IMR-90 (cell line): ENCODE measurements at regions of chr7 and their contacts with region 1.

Region 1: GRCh38 chr7:100545360-100546128 is 6.5 kb downstream of the AGFG2 start:
- DNase-seq: peak; percentile 86
- ATAC-seq: peak; percentile 93
- H3K4me3 ChIP-seq: no peak overlapping the region
- H3K27ac ChIP-seq: peak overlapping the region; percentile 49
- H3K4me1 ChIP-seq: peaks cover 28% of the 10 kb centered on the region
- H3K27me3 ChIP-seq: no peaks in the 10 kb centered on the region
- CTCF ChIP-seq: peak; percentile 18; the same call in 1 of the 2 replicates
- POLR2A ChIP-seq: no peak
- RAD21 ChIP-seq: no peak; the same call in 1 of the 2 replicates

Region 2: DNA sequence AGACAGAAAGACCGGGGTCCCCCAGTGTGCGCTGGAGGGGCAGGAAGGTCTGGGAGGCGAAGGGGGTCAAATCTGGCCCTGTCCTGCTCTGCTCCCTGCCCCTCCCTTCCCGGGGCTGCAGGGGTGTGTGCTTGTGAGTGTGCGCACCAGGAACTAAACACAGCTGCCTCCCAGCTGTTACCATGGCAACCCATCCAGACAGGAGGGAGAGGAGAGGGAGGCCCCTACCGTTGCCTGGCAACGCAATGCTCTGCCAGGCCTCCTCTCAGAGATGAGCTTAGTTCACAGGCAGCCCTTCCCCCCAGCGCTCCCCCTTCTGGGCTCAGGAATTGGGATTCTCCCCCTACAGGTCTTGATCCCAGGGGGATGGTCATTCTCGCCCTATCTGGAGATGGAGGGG is 55.7 kb before region 1 on chr7:
- CTCF ChIA-PET with region 1: interaction called, 4 read pairs
- POLR2A ChIA-PET with region 1: no interaction called
- dilution Hi-C with region 1: no loop called
- in situ Hi-C with region 1: no loop called
- intact Hi-C with region 1: loop called (anchors 5 kb)
- DNase-seq: peak; percentile 96
- ATAC-seq: peak; percentile 95
- H3K4me3 ChIP-seq: no peak overlapping the region
- H3K27ac ChIP-seq: no peak overlapping the region
- H3K4me1 ChIP-seq: no peaks in the 10 kb centered on the region; the same call in 1 of the 2 replicates
- H3K27me3 ChIP-seq: peaks cover 12% of the 10 kb centered on the region; the same call in 1 of the 2 replicates
- CTCF ChIP-seq: no peak
- POLR2A ChIP-seq: no peak
- RAD21 ChIP-seq: no peak

Region 3: GRCh38 chr7:100642534-100642907 is 97.0 kb after region 1 on chr7:
- CTCF ChIA-PET with region 1: no interaction called
- POLR2A ChIA-PET with region 1: no interaction called
- dilution Hi-C with region 1: no loop called
- in situ Hi-C with region 1: no loop called
- intact Hi-C with region 1: no loop called
- DNase-seq: no peak
- ATAC-seq: no peak
- H3K4me3 ChIP-seq: no peak overlapping the region
- H3K27ac ChIP-seq: no peak overlapping the region
- H3K4me1 ChIP-seq: no peaks in the 10 kb centered on the region
- H3K27me3 ChIP-seq: peaks cover 29% of the 10 kb centered on the region
- CTCF ChIP-seq: no peak
- POLR2A ChIP-seq: no peak
- RAD21 ChIP-seq: no peak